Endothelial cell of umbilical vein (primary cell): ENCODE measurements at regions of chr15 and their contacts with region 1.

Region 1: GRCh38 chr15:63402498-63403253 is 21.0 kb upstream of the CA12 start:
- DNase-seq: peak; percentile 67
- H3K4me3 ChIP-seq: no peak overlapping the region
- H3K27ac ChIP-seq: no peak overlapping the region
- H3K4me1 ChIP-seq: peaks cover 17% of the 10 kb centered on the region
- H3K27me3 ChIP-seq: no peaks in the 10 kb centered on the region
- CTCF ChIP-seq: peak; percentile 43 to 48
- POLR2A ChIP-seq: no peak

Region 2: DNA sequence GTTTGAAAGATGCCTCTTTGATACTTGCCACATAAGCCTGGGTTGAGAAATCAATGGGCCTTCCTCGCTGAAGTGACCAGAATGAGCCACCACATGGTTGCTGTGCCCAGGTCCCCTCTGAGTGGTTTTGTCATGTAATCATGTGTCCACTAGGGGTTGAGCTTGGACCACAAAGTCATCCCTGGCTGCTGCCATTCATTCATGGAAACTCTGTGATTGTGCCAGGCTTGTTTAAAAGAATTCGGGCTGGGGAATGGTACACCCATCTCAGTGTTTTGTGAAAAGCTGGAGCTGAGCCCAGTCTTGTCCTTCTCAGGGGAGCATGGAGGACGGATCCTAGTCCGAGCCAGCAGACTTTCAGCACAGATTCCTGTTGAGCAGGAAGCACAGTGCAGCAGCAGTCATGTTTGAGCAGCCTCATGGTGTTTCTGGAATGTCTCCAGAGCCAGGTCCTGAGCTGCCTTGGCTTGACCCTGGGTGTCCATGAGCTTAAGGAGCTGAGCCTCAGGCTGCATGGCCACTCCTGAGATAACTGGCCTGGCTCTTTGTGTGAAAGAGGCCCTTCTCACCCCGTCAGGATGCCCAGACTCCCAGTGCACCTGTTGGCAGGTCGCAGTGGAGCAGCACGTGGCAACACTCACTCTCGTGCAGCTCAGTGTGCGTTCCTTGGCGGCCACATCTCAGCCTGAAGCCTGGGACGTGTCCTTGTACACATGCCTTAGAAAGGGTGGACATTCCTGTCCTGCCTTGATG is 620.5 kb before region 1 on chr15:
- CTCF ChIA-PET with region 1: interaction called, 5 read pairs
- POLR2A ChIA-PET with region 1: no interaction called
- dilution Hi-C with region 1: no loop called
- intact Hi-C with region 1: loop called (anchors 2 kb)
- DNase-seq: peak; percentile 90
- H3K4me3 ChIP-seq: no peak overlapping the region
- H3K27ac ChIP-seq: no peak overlapping the region
- H3K4me1 ChIP-seq: peaks cover 8% of the 10 kb centered on the region
- H3K27me3 ChIP-seq: no peaks in the 10 kb centered on the region
- CTCF ChIP-seq: peak; percentile 73 to 77
- POLR2A ChIP-seq: no peak

Region 3: DNA sequence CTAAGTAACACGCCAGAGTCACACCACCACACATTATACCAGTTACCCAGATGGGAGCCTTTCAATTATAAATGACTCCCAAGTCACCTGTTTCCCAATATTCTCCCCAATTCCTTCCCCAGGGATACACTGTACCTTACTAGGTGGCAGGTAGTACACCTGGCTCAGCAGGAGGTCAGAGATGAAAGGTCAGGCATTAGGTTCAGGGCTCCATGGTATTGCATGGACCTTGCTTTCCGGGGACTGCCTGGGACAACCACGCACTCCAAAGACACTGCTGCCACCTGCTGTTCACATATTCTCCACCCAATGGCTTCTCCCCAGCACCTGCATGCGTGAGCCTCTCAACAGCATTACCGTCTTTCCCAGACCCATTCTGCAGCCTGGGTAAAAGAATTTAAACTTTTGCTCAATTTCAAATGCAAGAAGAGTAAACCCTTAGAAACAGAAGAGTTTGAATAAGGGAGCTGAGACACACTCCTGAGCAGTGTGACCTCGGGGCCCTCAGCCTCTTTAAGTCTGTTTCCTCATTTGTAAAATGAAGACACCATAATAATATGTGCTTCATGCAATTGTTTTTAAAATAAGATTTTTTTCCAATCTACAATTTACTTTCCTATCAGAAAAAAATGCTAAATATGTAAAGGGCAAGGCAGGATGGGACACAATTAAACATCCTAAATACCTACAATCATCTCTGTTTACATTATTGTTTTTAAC is 309.0 kb before region 1 on chr15:
- CTCF ChIA-PET with region 1: no interaction called
- POLR2A ChIA-PET with region 1: no interaction called
- dilution Hi-C with region 1: no loop called
- intact Hi-C with region 1: loop called (anchors 1 kb)
- DNase-seq: peak; percentile 73
- H3K4me3 ChIP-seq: no peak overlapping the region
- H3K27ac ChIP-seq: no peak overlapping the region
- H3K4me1 ChIP-seq: peaks cover 22% of the 10 kb centered on the region
- H3K27me3 ChIP-seq: no peaks in the 10 kb centered on the region
- CTCF ChIP-seq: peak; percentile 83 to 84
- POLR2A ChIP-seq: no peak

Region 4: GRCh38 chr15:63104727-63105126 is 297.9 kb before region 1 on chr15:
- CTCF ChIA-PET with region 1: no interaction called
- POLR2A ChIA-PET with region 1: no interaction called
- dilution Hi-C with region 1: no loop called
- intact Hi-C with region 1: no loop called
- DNase-seq: no peak
- H3K4me3 ChIP-seq: no peak overlapping the region
- H3K27ac ChIP-seq: no peak overlapping the region
- H3K4me1 ChIP-seq: peaks cover 3% of the 10 kb centered on the region
- H3K27me3 ChIP-seq: no peaks in the 10 kb centered on the region
- CTCF ChIP-seq: no peak
- POLR2A ChIP-seq: no peak

Region 5: DNA sequence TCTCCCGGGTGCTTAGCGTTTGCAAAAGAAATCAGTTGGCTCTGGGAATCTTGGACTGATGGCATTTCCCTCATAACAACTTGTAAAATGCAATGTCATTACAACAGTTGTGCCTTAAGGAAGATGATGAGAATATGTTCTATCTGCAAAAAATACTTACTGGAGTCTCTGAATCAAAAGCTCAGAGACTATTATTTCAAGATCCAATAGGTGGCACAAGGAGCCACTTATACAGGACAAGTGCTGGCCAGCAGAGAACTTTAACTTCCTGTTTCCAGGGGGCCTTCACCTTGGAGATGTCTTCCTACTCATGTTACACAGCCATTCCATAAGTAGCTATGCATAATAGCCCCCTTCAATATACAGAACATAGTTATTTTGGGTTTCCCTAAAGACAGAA is 236.5 kb before region 1 on chr15:
- CTCF ChIA-PET with region 1: interaction called, 15 read pairs
- POLR2A ChIA-PET with region 1: no interaction called
- dilution Hi-C with region 1: no loop called
- intact Hi-C with region 1: no loop called
- DNase-seq: no peak
- H3K4me3 ChIP-seq: no peak overlapping the region
- H3K27ac ChIP-seq: no peak overlapping the region
- H3K4me1 ChIP-seq: no peaks in the 10 kb centered on the region
- H3K27me3 ChIP-seq: no peaks in the 10 kb centered on the region
- CTCF ChIP-seq: no peak
- POLR2A ChIP-seq: no peak

Region 6: DNA sequence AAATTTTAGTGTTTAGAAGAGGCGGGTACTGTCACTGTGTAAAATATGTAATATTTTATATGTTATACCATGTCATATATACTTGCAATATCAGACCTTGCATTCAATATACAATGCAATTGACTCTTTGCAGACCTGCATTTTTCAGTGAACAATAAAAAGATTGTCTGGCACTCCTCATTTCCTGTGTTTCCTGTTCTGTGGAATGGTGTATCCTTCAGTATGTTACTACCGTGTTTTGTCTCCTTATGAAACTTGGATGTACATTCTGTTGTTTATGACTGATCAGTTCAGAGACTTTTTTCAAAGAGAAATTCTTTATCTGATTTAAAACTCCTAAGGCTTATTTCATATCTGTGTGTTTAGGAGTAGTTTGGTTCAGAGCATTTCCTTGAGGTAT is 93.7 kb before region 1 on chr15:
- CTCF ChIA-PET with region 1: interaction called, 10 read pairs
- POLR2A ChIA-PET with region 1: no interaction called
- dilution Hi-C with region 1: no loop called
- intact Hi-C with region 1: no loop called
- DNase-seq: peak; percentile 74
- H3K4me3 ChIP-seq: no peak overlapping the region
- H3K27ac ChIP-seq: peak overlapping the region; percentile 34
- H3K4me1 ChIP-seq: peaks cover 15% of the 10 kb centered on the region
- H3K27me3 ChIP-seq: no peaks in the 10 kb centered on the region
- CTCF ChIP-seq: no peak
- POLR2A ChIP-seq: no peak

Region 7: GRCh38 chr15:63466378-63467192 is 63.9 kb after region 1 on chr15:
- CTCF ChIA-PET with region 1: interaction called, 10 read pairs
- POLR2A ChIA-PET with region 1: no interaction called
- dilution Hi-C with region 1: no loop called
- intact Hi-C with region 1: loop called (anchors 5 kb)
- DNase-seq: peak; percentile 77
- H3K4me3 ChIP-seq: no peak overlapping the region
- H3K27ac ChIP-seq: no peak overlapping the region
- H3K4me1 ChIP-seq: peaks cover 8% of the 10 kb centered on the region
- H3K27me3 ChIP-seq: no peaks in the 10 kb centered on the region
- CTCF ChIP-seq: peak; percentile 54 to 63
- POLR2A ChIP-seq: no peak

Region 8: GRCh38 chr15:64693134-64693533 is 1290.5 kb after region 1 on chr15:
- CTCF ChIA-PET with region 1: no interaction called
- POLR2A ChIA-PET with region 1: no interaction called
- dilution Hi-C with region 1: no loop called
- intact Hi-C with region 1: no loop called
- DNase-seq: no peak
- H3K4me3 ChIP-seq: no peak overlapping the region
- H3K27ac ChIP-seq: no peak overlapping the region
- H3K4me1 ChIP-seq: no peaks in the 10 kb centered on the region
- H3K27me3 ChIP-seq: no peaks in the 10 kb centered on the region
- CTCF ChIP-seq: no peak
- POLR2A ChIP-seq: no peak